Naive thymus-derived CD4-positive, alpha-beta T cell (primary cell): ENCODE measurements at regions of chr7 and their contacts with region 1.

Region 1: DNA sequence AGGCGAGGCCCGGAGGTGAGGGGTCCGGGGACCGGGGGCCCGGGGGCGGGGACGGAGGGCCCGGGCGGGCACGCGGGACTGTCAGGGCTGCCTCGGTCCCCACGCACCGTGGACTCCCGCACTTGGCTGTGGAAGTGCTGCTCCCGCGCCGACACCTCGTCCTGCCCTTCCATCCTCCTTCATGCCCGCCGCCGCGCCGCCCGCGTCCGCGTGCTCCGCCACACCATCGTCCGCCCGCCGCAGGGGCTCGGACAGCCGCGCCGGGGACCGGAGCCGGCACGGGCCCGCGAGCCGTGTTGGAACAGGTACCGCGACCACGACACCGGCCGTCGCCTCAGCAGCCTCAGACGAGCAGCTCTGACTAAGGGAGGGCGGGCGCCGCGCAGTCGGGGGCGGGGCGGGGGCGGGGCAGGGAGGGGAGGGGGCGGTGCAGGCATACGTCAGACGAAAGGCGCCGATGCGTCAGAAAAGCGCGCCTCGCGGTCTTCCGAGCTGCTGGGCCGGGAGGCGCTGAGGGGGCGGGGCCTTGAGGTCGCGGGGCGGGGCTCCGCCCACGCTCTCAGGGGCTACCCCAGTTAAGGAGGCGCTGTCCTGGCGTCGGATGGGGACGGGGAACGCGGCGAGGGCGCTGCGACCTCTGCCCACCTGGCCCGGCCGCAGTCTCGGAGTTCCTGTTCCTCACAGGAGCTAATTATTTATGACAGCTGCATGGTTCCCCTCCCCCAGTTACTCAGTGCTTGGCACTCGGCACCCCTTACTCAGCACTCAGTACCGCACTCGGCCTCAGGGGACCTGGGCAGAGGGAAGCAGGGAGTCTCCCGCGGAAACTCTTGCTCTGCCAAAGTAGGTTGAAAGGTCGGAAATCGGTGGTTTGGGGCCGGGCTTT is at the start of gene LMBR1:
- DNase-seq: peak; percentile 90 to 96 (median 93)
- ATAC-seq: peak; percentile 93
- H3K4me3 ChIP-seq: peak within 1 kb of the TSS; percentile 98
- H3K4me3 Mint-ChIP-seq: peak within 1 kb of the TSS; percentile 88 to 96 (median 92)
- H3K27ac ChIP-seq: peak within 1 kb of the TSS; percentile 91
- H3K27ac Mint-ChIP-seq: peak within 1 kb of the TSS; percentile 75 to 95 (median 92)
- H3K4me1 ChIP-seq: peaks cover 7 to 11% of the 10 kb centered on the region in 2 donors
- H3K4me1 Mint-ChIP-seq: peaks cover 19 to 52% (median 45%) of the 10 kb centered on the region in 7 donors
- H3K27me3 ChIP-seq: no peaks in the 10 kb centered on the region
- H3K27me3 Mint-ChIP-seq: no peaks in the 10 kb centered on the region
- total RNA-seq, gene LMBR1: 56.0 to 101 (median 69.0) TPM

Region 2: DNA sequence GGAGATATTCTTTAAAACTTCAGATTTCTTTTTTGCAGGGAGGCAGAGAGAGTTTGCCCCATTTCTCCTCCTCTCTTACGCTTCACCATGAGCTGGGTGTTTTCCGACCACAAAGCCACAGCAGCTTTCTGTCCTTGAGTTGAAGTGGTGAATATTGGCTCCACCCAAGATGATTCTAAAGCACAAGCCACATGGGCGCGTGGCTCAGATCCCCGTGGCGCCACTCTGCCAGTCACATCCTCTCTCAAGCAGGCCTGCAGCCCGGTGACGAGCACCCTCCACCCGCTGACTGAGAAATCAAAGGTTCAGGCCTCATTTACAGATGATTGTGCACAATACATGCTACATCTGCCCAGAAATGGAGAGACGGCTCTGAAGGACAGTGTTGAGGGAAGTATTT is 280.1 kb before region 1 on chr7:
- CTCF ChIA-PET with region 1: no interaction called
- POLR2A ChIA-PET with region 1: no interaction called
- intact Hi-C with region 1: loop called in 1 of 2 experiments (anchors 10 kb)
- DNase-seq: peak in 8 of 9 donors; percentile 50 to 83 (median 74)
- ATAC-seq: peak; percentile 94
- H3K4me3 ChIP-seq: no peak overlapping the region
- H3K4me3 Mint-ChIP-seq: peak overlapping the region in 9 of 10 donors; percentile 3 to 77 (median 40)
- H3K27ac ChIP-seq: no peak overlapping the region
- H3K27ac Mint-ChIP-seq: peak overlapping the region in 6 of 9 donors; percentile 12 to 76 (median 38)
- H3K4me1 ChIP-seq: peaks cover 14 to 22% of the 10 kb centered on the region in 2 donors
- H3K4me1 Mint-ChIP-seq: peaks cover 17 to 55% (median 41%) of the 10 kb centered on the region in 7 donors
- H3K27me3 ChIP-seq: peaks cover 0 to 4% of the 10 kb centered on the region in 2 donors
- H3K27me3 Mint-ChIP-seq: peaks cover 38 to 72% (median 47%) of the 10 kb centered on the region in 5 donors

Region 3: GRCh38 chr7:156875766-156876165 is 17.3 kb before region 1 on chr7:
- CTCF ChIA-PET with region 1: no interaction called
- POLR2A ChIA-PET with region 1: interaction called, 3 read pairs
- intact Hi-C with region 1: loop called in 1 of 2 experiments (anchors 2 kb)
- DNase-seq: no peak
- ATAC-seq: no peak
- H3K4me3 ChIP-seq: no peak overlapping the region
- H3K4me3 Mint-ChIP-seq: peak overlapping the region in 1 of 10 donors; percentile 37
- H3K27ac ChIP-seq: no peak overlapping the region
- H3K27ac Mint-ChIP-seq: no peak overlapping the region
- H3K4me1 ChIP-seq: peaks cover 0 to 3% of the 10 kb centered on the region in 2 donors
- H3K4me1 Mint-ChIP-seq: peaks cover 14 to 60% (median 50%) of the 10 kb centered on the region in 7 donors
- H3K27me3 ChIP-seq: no peaks in the 10 kb centered on the region
- H3K27me3 Mint-ChIP-seq: no peaks in the 10 kb centered on the region

Region 4: GRCh38 chr7:156949541-156950380 is 56.7 kb after region 1 on chr7 and contains the start of gene NOM1:
- CTCF ChIA-PET with region 1: interaction called, 4 read pairs
- POLR2A ChIA-PET with region 1: interaction called, 7 read pairs
- intact Hi-C with region 1: loop called (anchors 1 kb)
- DNase-seq: peak; percentile 80 to 96 (median 90)
- ATAC-seq: peak; percentile 99
- H3K4me3 ChIP-seq: peak within 1 kb of the TSS; percentile 96
- H3K4me3 Mint-ChIP-seq: peak within 1 kb of the TSS; percentile 86 to 99 (median 97)
- H3K27ac ChIP-seq: peak within 1 kb of the TSS; percentile 82
- H3K27ac Mint-ChIP-seq: peak within 1 kb of the TSS; percentile 66 to 98 (median 90)
- H3K4me1 ChIP-seq: peaks cover 9 to 13% of the 10 kb centered on the region in 2 donors
- H3K4me1 Mint-ChIP-seq: peaks cover 8 to 44% (median 34%) of the 10 kb centered on the region in 7 donors
- H3K27me3 ChIP-seq: no peaks in the 10 kb centered on the region
- H3K27me3 Mint-ChIP-seq: peaks cover 1 to 23% (median 6%) of the 10 kb centered on the region in 5 donors
- total RNA-seq, gene NOM1: 28.1 to 40.7 (median 32.9) TPM

Region 5: GRCh38 chr7:157625973-157626742 is 733.1 kb after region 1 on chr7:
- CTCF ChIA-PET with region 1: no interaction called
- POLR2A ChIA-PET with region 1: no interaction called
- intact Hi-C with region 1: loop called in 1 of 2 experiments (anchors 2 kb)
- DNase-seq: peak in 7 of 9 donors; percentile 54 to 83 (median 80)
- ATAC-seq: peak; percentile 79
- H3K4me3 ChIP-seq: peak overlapping the region; percentile 18
- H3K4me3 Mint-ChIP-seq: peak overlapping the region; percentile 69 to 84 (median 76)
- H3K27ac ChIP-seq: no peak overlapping the region
- H3K27ac Mint-ChIP-seq: peak overlapping the region; percentile 28 to 96 (median 89)
- H3K4me1 ChIP-seq: peaks cover 15 to 71% of the 10 kb centered on the region in 2 donors
- H3K4me1 Mint-ChIP-seq: peaks cover 41 to 81% (median 77%) of the 10 kb centered on the region in 7 donors
- H3K27me3 ChIP-seq: no peaks in the 10 kb centered on the region
- H3K27me3 Mint-ChIP-seq: peaks cover 0 to 48% (median 4%) of the 10 kb centered on the region in 5 donors